Ovary (tissue), 10 donors: ENCODE measurements at regions of chr1 and their contacts with region 1.

Region 1: DNA sequence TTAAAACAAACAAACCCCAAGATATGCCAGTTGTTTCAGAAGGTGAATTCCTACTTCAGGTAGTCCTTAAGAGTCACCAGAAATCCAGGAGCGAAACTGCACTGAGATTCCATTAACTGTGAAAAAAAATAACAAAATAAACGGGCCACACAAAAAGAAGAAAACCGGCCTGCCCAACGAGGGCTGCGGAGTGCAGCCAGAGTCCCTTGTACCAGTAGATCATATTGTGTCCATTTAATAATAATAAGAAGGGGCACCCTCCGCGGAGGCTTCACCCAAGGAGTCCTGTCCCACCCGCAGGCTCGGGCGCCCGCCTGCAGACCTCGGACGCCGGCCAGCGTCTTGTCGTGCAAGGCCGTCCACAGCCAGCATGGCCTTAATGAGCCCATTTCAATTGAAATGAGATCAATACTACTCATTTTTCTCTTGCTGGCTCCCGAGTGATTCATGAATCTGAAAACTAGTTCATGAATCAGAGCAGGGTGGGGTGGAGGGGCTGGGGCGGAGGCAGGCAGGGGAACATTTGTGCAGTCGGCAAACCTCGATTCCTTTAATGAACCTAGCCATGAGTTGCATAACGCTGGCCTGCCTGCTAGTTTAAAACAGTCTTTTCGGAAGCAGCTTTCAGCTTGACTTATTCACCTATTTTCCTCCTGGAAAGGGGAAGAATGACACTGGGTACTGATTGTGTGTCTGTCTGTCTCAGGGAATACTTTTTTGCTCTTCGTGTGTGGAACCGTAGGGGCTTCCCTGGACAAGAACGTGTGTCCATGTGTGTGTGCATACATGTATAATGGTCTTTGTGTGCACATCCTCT is 113.1 kb upstream of the IRF2BP2 start:
- DNase-seq: peak; percentile 61 to 87 (median 64)
- H3K4me3 ChIP-seq: no peak overlapping the region
- H3K27ac ChIP-seq: peak overlapping the region; percentile 53 to 99
- H3K4me1 ChIP-seq: peaks cover 53% of the 10 kb centered on the region
- H3K27me3 ChIP-seq: no peaks in the 10 kb centered on the region
- CTCF ChIP-seq: no peak
- EP300 ChIP-seq: no peak
- POLR2A ChIP-seq: no peak

Region 2: GRCh38 chr1:234499119-234499942 is 223.8 kb before region 1 on chr1:
- intact Hi-C with region 1: loop called in 1 of 4 experiments (anchors 10 kb)
- DNase-seq: peak; percentile 88 to 95 (median 93)
- H3K4me3 ChIP-seq: peak overlapping the region; percentile 2
- H3K27ac ChIP-seq: peak overlapping the region; percentile 58 to 74
- H3K4me1 ChIP-seq: peaks cover 8% of the 10 kb centered on the region
- H3K27me3 ChIP-seq: no peaks in the 10 kb centered on the region
- CTCF ChIP-seq: peak; percentile 86 to 98 (median 93)
- EP300 ChIP-seq: no peak
- POLR2A ChIP-seq: peak; percentile 35

Region 3: DNA sequence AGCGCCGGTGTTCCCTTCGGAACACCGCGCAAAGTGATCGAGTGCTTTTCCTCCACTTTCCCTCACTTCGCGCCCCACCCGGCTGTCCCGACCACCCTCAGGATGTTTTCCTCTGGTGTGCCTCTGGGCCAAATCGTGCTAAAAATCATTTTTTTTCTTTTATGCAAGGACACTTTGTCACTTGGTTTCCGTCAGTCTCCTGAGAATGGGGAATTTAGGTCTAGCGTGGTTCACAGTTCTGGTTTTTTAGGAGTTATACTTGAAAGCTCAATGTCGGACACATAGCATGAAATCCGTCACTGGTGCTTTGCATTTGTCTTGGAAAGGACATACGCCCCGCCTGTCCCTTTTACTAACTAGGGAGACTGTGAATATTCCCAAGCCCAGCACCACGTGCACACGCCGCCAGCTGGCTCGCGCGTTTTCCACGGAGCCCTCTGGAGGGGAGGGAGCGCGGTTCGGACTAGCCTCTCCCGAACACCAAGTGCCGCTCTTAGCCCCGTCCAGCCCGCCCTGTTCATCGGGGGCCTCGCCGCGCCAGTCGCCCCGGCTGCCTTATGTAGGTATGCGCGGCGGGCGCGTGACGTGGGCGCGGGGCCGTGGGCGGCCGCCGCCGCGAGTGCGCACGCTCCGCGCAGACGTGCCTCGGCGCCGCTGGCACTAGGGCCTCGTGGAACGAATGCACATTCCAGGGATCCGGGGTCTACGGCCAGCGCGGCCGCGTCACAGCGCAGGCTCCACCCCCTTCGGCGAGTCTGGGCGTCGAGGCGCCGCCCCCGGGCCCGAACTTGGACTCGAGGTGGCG is 112.6 kb before region 1 on chr1:
- intact Hi-C with region 1: loop called (anchors 2 to 5 kb)
- DNase-seq: peak; percentile 96 to 98 (median 97)
- H3K4me3 ChIP-seq: peak overlapping the region; percentile 46
- H3K27ac ChIP-seq: peak overlapping the region; percentile 85 to 98
- H3K4me1 ChIP-seq: peaks cover 19% of the 10 kb centered on the region
- H3K27me3 ChIP-seq: no peaks in the 10 kb centered on the region
- CTCF ChIP-seq: peak in 2 of 3 donors; percentile 37 to 53
- EP300 ChIP-seq: no peak
- POLR2A ChIP-seq: peak; percentile 95

Region 4: GRCh38 chr1:234823191-234824176 is 100.4 kb after region 1 on chr1:
- intact Hi-C with region 1: no loop called
- DNase-seq: no peak
- H3K4me3 ChIP-seq: no peak overlapping the region
- H3K27ac ChIP-seq: no peak overlapping the region
- H3K4me1 ChIP-seq: no peaks in the 10 kb centered on the region
- H3K27me3 ChIP-seq: no peaks in the 10 kb centered on the region
- CTCF ChIP-seq: no peak
- EP300 ChIP-seq: no peak
- POLR2A ChIP-seq: no peak

Region 5: GRCh38 chr1:234978397-234979295 is 255.5 kb after region 1 on chr1:
- intact Hi-C with region 1: loop called in 2 of 4 experiments (anchors 10 kb)
- DNase-seq: peak in 1 of 5 donors; percentile 56
- H3K4me3 ChIP-seq: no peak overlapping the region
- H3K27ac ChIP-seq: peak overlapping the region in 1 of 2 donors; percentile 83
- H3K4me1 ChIP-seq: peaks cover 34% of the 10 kb centered on the region
- H3K27me3 ChIP-seq: no peaks in the 10 kb centered on the region
- CTCF ChIP-seq: no peak
- EP300 ChIP-seq: no peak
- POLR2A ChIP-seq: no peak

Region 6: GRCh38 chr1:234997201-234997895 is 274.2 kb after region 1 on chr1:
- intact Hi-C with region 1: loop called in 1 of 4 experiments (anchors 5 kb)
- DNase-seq: peak; percentile 93 to 97 (median 97)
- H3K4me3 ChIP-seq: no peak overlapping the region
- H3K27ac ChIP-seq: peak overlapping the region; percentile 62 to 64
- H3K4me1 ChIP-seq: peaks cover 9% of the 10 kb centered on the region
- H3K27me3 ChIP-seq: no peaks in the 10 kb centered on the region
- CTCF ChIP-seq: no peak
- EP300 ChIP-seq: peak; percentile 78
- POLR2A ChIP-seq: peak; percentile 22